ENCODE measurements at regions of chr2 and their contacts with region 1.

Region 1: DNA sequence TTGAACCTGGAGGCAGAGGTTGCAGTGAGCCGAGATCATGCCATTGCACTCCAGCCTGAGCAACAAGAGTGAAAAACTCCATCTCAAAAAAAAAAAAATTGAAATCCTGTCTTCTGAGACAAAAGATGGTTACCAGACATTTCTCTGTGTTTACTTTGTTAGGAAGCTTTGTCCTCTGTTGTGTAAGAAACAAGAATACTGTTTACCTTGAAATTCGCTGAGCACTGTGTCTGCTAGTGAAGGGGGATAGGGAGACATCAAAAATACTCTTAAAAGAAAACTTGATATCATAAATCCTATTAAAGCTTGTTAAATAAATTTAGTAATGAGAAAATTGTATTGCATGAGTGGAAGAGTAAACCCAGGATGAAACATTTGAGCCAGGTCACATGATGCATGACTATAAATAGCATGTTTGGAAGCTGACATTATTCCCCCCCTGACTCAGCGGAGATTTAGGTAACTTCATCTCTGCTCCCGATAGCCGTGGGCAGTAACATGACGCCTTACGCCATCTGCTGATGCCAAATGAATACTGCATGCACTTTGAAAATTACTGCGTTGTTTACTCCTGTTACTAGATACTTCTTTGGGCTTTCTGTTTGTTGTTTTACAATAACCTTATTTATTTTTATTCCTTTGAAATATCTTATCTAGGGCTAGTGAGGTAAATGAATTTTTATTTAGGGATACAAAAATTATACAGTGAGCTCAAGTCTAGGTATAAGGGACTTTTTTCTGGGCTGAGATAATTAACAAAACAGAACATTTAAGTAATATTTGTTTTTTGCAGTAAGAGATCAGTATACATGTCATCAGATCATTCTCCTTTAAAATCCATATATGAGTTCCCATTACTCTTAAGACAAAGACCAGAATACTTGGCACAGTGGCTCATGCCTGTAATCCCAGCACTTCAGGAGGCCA is 134.9 kb downstream of the MAP3K20 start:
- DNase-seq: peak; percentile 88
- H3K4me3 ChIP-seq: no peak overlapping the region
- H3K27ac ChIP-seq: peak overlapping the region; percentile 72
- H3K4me1 ChIP-seq: peaks cover 17% of the 10 kb centered on the region
- H3K27me3 ChIP-seq: no peaks in the 10 kb centered on the region
- CTCF ChIP-seq: peak; percentile 81 to 88

Region 2: GRCh38 chr2:172972005-172972619 is 238.4 kb before region 1 on chr2:
- CTCF ChIA-PET with region 1: no interaction called
- dilution Hi-C with region 1: no loop called
- in situ Hi-C with region 1: no loop called
- intact Hi-C with region 1: loop called (anchors 2 kb)
- DNase-seq: peak; percentile 44
- H3K4me3 ChIP-seq: no peak overlapping the region
- H3K27ac ChIP-seq: no peak overlapping the region
- H3K4me1 ChIP-seq: peaks cover 3% of the 10 kb centered on the region
- H3K27me3 ChIP-seq: no peaks in the 10 kb centered on the region
- CTCF ChIP-seq: peak; percentile 91 to 98

Region 3: DNA sequence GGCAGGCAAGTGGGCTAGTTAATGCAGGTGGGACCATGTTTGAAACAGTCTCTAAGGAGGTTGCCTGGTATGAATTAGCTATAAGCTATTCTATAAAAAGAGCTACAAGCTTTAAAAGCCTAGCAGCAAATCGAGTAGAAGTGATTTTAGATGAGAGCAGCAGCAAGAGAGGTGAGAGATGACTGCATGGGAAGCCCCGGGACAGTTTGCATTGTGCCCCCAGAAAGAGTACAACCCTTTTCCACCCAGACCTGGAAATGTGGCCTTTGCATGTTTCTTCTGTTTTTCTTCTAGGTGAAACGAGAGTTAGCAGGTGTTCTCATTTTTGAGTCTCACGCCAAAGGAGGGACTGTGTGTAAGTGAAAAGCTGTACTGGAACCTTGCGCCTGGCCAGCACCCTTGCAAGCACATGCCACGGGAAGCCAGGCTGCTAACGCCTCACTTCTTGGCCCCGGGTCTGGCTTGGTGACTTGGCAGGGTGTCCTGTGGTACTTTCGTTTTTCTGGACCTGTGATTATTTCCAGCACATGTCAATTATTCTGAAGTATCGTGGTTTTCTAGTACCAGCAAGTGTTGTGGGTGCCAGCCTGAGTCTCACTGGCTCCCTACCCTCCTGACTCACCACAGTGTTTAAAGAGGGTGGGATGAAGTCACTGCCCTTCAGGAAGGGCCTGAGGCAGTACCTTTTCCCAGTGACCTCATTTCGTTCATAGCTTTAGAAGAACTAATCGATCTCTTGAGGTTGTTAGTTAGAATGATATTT is 225.2 kb before region 1 on chr2:
- CTCF ChIA-PET with region 1: no interaction called
- dilution Hi-C with region 1: no loop called
- in situ Hi-C with region 1: no loop called
- intact Hi-C with region 1: loop called (anchors 5 kb)
- DNase-seq: peak; percentile 92
- H3K4me3 ChIP-seq: peak overlapping the region in 2 of 3 experiments; percentile 27 to 35
- H3K27ac ChIP-seq: peak overlapping the region; percentile 72
- H3K4me1 ChIP-seq: peaks cover 16% of the 10 kb centered on the region
- H3K27me3 ChIP-seq: no peaks in the 10 kb centered on the region
- CTCF ChIP-seq: no peak

Region 4: GRCh38 chr2:173048897-173049661 is 161.5 kb before region 1 on chr2:
- CTCF ChIA-PET with region 1: no interaction called
- dilution Hi-C with region 1: no loop called
- in situ Hi-C with region 1: no loop called
- intact Hi-C with region 1: loop called (anchors 1 kb)
- DNase-seq: peak; percentile 99
- H3K4me3 ChIP-seq: no peak overlapping the region
- H3K27ac ChIP-seq: peak overlapping the region; percentile 100
- H3K4me1 ChIP-seq: peaks cover 35% of the 10 kb centered on the region
- H3K27me3 ChIP-seq: no peaks in the 10 kb centered on the region
- CTCF ChIP-seq: no peak

Region 5: DNA sequence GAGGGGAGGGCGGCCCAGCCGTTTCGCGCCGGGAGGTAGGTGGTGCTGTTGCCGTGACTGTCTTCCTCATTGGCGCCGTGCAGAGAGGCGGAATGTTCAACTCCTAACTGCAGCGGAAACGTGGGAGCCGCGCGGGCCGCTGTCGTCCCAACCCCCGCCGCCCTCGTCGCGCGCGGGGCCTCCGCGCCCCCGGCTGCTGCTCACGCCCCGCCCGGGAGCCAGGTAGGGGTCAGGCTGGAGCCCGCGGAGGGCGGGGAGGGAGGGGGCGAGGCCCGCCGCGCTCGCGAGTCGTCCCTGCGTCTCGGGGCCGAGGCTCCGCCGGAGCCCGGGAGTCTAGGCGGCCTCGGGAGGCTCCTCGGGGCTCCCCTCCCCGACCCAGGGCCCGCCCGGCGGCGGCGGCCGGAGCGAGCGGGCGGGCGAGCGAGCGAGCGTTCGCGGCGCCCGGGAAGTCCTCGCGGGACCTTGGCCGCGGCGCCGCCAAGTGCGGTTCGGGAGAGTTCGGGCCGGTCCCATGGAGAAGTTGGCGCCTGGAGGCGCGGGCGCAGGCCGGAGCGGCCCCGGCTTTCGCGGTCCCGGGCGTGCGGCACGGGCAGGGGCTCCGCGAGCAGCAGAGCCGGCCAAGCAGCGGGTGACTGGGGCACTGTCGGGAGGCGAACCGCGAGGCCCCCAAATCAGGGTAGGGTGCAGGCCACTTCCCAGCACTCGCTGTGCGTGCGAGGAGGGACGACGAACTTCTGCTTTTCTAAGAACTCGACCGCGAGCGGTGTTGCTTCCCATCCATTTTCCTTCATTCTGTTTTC is 134.6 kb before region 1 on chr2 and contains the start of gene MAP3K20:
- CTCF ChIA-PET with region 1: no interaction called
- dilution Hi-C with region 1: no loop called
- in situ Hi-C with region 1: no loop called
- intact Hi-C with region 1: loop called (anchors 1 kb)
- DNase-seq: peak; percentile 65
- H3K4me3 ChIP-seq: peak within 1 kb of the TSS; percentile 66 to 88 (median 84)
- H3K27ac ChIP-seq: peak within 1 kb of the TSS; percentile 95
- H3K4me1 ChIP-seq: peaks cover 35% of the 10 kb centered on the region
- H3K27me3 ChIP-seq: no peaks in the 10 kb centered on the region
- CTCF ChIP-seq: peak in 1 of 2 donors; percentile 58
- total RNA-seq, gene MAP3K20: 31.8 to 109 TPM

Region 6: DNA sequence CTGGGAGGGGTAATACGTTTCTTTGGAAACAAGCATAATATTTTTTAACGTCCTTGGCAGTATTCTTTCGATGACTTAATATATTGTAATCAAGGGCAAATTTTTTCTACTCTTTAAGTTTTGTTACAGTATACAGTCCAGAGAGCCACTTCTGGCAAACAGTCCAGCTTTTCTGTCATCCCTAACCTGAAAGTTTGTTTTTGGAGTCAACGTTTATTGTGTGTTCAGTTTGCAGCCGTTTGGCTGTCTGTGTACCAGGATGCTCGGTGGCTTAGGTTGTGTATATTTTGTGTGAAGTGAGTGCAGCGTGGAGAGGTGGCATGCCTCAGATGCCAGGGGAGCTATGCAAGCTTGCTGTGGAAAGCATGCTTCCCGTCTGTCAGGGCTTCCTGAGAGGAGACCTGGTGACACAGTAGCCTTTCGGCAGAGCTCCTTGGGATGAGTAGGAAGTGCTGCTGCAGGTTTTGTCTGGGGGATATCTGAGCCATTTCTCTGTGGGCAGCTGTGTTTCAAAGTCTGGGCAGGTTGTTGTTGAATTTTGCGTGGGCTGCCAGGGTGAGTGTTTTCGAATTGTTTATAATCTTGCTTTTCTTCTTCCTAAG is 120.2 kb before region 1 on chr2:
- CTCF ChIA-PET with region 1: no interaction called
- dilution Hi-C with region 1: no loop called
- in situ Hi-C with region 1: no loop called
- intact Hi-C with region 1: loop called (anchors 5 kb)
- DNase-seq: no peak
- H3K4me3 ChIP-seq: no peak overlapping the region
- H3K27ac ChIP-seq: peak overlapping the region; percentile 40
- H3K4me1 ChIP-seq: peaks cover 19% of the 10 kb centered on the region
- H3K27me3 ChIP-seq: no peaks in the 10 kb centered on the region
- CTCF ChIP-seq: no peak

Region 7: GRCh38 chr2:173134703-173135102 is 75.8 kb before region 1 on chr2:
- CTCF ChIA-PET with region 1: no interaction called
- dilution Hi-C with region 1: no loop called
- in situ Hi-C with region 1: no loop called
- intact Hi-C with region 1: no loop called
- DNase-seq: no peak
- H3K4me3 ChIP-seq: no peak overlapping the region
- H3K27ac ChIP-seq: peak overlapping the region; percentile 71
- H3K4me1 ChIP-seq: peaks cover 43% of the 10 kb centered on the region
- H3K27me3 ChIP-seq: no peaks in the 10 kb centered on the region
- CTCF ChIP-seq: no peak

Region 8: DNA sequence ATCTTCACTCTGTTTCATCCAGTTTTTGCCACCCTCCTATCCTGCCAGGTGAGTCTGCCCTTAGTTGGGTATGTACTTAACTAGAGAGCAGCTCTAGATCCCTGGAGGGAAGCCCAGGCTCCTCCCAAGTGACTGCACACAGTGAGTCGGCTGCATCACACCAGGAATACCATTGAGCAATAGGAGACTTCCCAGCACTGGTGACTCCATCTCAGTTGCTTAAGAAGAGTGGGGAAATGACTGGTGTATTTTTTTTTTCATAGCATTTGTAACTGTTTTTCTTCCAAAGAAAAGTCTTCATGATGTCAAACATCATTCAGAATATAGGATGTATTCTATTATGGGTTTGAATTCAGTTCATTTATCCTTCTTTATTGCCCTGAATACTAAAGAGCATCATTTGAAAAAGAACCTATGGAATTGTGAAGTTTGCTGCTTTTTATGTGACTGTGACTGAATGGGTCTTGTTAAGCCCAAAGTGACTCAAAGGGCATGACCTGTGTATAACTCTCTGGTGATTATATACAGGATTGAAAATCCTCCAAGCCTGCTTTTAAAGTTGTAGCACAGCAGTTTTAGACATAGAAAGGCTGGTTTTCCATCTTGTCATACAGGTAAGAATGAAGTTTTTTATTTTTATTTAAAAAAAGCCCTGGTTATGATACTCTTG is 50.6 kb before region 1 on chr2:
- CTCF ChIA-PET with region 1: no interaction called
- dilution Hi-C with region 1: loop called (anchors 5 kb)
- in situ Hi-C with region 1: no loop called
- intact Hi-C with region 1: loop called (anchors 2 kb)
- DNase-seq: peak; percentile 99
- H3K4me3 ChIP-seq: no peak overlapping the region
- H3K27ac ChIP-seq: peak overlapping the region; percentile 82
- H3K4me1 ChIP-seq: peaks cover 32% of the 10 kb centered on the region
- H3K27me3 ChIP-seq: no peaks in the 10 kb centered on the region
- CTCF ChIP-seq: no peak

Measured in mammary epithelial cell (primary cell).